ENCODE measurements at regions of chr12 and their contacts with region 1.

Region 1: DNA sequence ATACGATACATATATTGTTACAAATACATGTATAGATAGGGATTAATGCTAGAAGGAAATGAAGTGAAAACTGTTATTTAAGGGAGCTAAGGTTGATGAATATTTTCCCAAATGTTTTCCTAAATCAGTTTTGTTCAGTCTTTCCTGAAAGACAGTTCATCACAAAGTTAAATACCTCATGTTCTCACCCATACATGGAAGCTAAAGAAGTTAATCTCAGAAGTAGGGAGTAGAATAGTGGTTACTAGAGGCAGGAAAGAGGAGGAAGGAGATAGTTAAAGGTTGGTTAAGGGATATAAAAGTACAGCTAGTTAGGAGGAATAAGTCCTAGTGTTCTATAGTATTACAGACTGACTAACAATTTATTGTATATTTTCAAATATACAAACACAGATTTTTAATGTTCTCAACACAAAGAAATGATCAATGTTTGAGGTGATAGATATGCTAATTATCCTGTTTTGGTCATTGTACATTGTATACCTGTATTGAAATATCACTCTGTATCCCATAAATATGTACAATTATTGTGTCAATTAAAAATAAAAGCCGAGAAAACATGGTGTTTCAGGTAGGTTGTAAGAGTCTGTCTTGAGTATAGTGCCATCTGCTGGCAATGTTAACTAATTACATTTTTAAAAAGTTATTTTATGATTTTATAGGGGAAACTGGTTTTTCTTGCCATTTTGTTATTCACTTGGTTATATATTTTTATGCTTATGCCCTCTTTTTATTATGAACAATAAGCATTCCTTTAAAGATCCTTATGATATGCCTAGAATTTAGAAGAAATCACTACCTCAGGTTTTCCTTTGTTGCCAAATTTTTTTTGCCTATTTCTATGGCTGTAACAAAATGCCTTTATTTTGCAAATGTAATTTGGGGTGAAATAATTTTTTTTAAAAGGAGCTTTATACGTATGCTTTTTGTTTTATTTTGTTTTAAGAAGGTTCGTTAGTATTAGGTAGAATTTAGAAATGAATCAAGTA is 26.9 kb downstream of the ZDHHC17 start:
- DNase-seq: no peak
- H3K4me3 ChIP-seq: no peak overlapping the region
- CTCF ChIP-seq: no peak

Region 2: DNA sequence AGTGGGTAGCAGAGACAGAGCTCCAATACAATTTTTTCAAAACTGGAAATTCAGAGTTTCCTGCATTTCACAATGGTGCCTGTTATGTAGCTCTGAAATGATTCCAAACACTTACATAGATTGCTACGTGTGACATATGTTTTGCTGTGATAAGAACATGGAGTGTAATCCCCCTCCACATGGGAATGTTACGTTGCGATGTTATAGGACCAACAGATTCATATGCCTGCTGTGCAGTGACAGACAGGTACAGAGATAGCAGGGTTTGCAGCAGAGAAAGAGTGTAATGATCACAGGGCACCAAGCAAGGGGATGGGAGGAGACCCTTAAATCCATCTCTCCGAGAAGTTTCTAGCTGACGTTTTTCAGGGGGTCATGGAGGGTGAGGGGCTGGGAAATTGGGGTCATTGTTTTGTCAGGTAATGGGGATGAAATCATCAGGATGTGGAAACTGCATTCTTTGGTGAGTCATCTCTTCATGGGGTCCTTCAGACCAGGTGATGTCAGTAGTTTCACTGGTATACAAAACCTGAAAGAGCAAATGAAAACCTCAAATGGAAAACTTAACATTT is 154.7 kb before region 1 on chr12:
- CTCF ChIA-PET with region 1: interaction called, 42 read pairs
- POLR2A ChIA-PET with region 1: no interaction called
- DNase-seq: no peak
- H3K4me3 ChIP-seq: no peak overlapping the region
- CTCF ChIP-seq: no peak

Region 3: GRCh38 chr12:76720068-76720467 is 70.8 kb before region 1 on chr12:
- CTCF ChIA-PET with region 1: no interaction called
- POLR2A ChIA-PET with region 1: no interaction called
- DNase-seq: no peak
- H3K4me3 ChIP-seq: no peak overlapping the region
- CTCF ChIP-seq: no peak

Region 4: GRCh38 chr12:76763743-76764675 is 26.8 kb before region 1 on chr12 and contains the start of gene ZDHHC17:
- CTCF ChIA-PET with region 1: interaction called, 18 read pairs
- POLR2A ChIA-PET with region 1: no interaction called
- DNase-seq: peak; percentile 51
- H3K4me3 ChIP-seq: peak within 1 kb of the TSS; percentile 95
- CTCF ChIP-seq: no peak

Region 5: DNA sequence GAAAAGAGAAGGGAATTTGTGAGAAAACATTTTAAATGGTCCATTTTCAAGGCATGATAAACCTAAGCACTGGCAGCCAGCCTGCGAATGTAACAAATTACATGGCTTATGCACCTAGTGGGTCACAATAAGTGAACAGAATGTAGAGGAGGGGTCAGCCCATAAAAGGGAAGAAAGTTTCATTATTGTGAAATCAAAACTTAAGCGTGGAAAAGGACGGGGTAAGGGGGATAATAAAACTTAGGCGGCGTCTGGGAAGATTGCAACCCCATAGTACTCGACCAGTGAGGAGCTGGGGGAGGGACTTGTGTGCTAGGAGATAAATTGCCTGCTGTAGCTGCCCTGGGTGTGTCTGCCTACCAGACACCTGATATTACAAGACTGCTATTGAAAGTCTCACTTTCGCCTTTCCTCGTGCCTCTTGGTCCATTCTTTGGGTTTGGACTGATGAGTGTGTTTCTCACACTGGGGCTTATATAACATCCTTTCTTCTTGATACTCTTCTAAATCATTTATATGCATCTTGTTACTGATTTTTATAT is 13.6 kb after region 1 on chr12:
- CTCF ChIA-PET with region 1: interaction called, 24 read pairs
- POLR2A ChIA-PET with region 1: no interaction called
- DNase-seq: no peak
- H3K4me3 ChIP-seq: no peak overlapping the region
- CTCF ChIP-seq: no peak

Measured in AG04449 (cell line).